ENCODE measurements at regions of chr2 and their contacts with region 1.

Region 1: GRCh38 chr2:201344663-201345366 is 12.3 kb downstream of the FLACC1 start:
- DNase-seq: no peak
- H3K4me3 ChIP-seq: no peak overlapping the region
- H3K27ac ChIP-seq: no peak overlapping the region
- H3K4me1 ChIP-seq: no peaks in the 10 kb centered on the region
- H3K27me3 ChIP-seq: no peaks in the 10 kb centered on the region
- CTCF ChIP-seq: peak; percentile 38 to 70 (median 55)
- EP300 ChIP-seq: no peak
- POLR2A ChIP-seq: no peak
- RAD21 ChIP-seq: peak; percentile 47 to 56

Region 2: GRCh38 chr2:201322772-201323171 is 22.0 kb before region 1 on chr2:
- CTCF ChIA-PET with region 1: interaction called, 17 read pairs
- POLR2A ChIA-PET with region 1: no interaction called
- DNase-seq: no peak
- H3K4me3 ChIP-seq: no peak overlapping the region
- H3K27ac ChIP-seq: no peak overlapping the region
- H3K4me1 ChIP-seq: no peaks in the 10 kb centered on the region
- H3K27me3 ChIP-seq: no peaks in the 10 kb centered on the region
- CTCF ChIP-seq: no peak
- EP300 ChIP-seq: no peak
- POLR2A ChIP-seq: no peak
- RAD21 ChIP-seq: no peak

Region 3: DNA sequence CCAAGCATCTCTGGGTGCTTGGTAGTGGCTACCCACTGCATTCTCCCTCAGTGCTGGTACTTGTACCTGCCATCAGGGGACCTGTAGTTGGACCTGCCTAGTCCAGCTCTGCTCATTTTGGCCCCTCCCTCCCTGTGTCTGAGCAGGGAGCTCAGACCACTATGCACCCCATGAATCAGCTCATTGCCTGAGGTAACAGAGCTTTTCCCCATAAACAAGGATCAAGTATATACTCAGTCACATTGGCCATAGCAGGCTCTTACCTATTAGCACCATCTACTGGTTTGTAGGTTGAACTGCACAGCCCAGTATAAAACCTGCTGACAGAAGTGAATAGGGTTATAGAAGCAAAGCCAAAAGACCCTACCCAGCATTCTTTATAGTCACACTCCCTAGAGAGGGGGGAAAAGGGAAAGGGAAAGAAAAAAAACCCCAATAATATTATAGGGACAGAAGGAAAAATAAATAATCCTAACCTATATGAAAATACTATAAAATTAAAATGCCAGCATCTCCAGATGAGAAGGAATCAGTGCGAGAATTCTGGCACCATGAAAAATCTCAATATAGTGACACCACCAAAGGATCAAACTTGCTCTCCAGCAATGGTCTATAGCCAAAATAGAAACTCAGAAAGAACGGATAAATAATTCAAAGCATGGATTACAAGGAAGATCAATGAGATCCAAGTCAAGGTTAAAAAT is 19.2 kb after region 1 on chr2:
- CTCF ChIA-PET with region 1: interaction called, 59 read pairs
- POLR2A ChIA-PET with region 1: no interaction called
- DNase-seq: no peak
- H3K4me3 ChIP-seq: no peak overlapping the region
- H3K27ac ChIP-seq: no peak overlapping the region
- H3K4me1 ChIP-seq: no peaks in the 10 kb centered on the region
- H3K27me3 ChIP-seq: no peaks in the 10 kb centered on the region
- CTCF ChIP-seq: peak in 2 of 3 experiments; percentile 81 to 85; a peak in 3 of 4 replicates
- EP300 ChIP-seq: no peak
- POLR2A ChIP-seq: no peak
- RAD21 ChIP-seq: peak; percentile 88 to 92

Measured in H1 (cell line).